Caco-2 (cell line): ENCODE measurements at regions of chr17 and their contacts with region 1.

Region 1: DNA sequence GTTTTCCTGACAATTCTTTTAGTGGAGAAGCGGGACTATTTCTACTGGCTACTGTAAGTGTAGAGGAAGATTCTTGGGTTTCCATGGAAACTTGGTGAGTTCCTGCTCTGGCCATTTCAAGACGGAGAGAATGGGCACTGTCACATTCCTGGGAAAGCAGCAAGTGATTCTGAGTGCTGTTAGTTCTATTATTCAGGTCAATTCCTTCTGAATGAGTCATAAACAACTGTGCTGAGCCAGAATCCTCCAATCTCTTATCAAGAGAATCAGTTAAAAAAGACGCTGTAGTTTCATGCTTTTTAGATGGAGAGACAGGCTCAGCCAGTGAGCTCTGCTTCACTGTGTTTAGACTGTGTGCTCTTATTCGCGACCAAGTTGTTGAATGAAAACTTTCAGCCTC is 19.6 kb downstream of the AKAP10 start:
- DNase-seq: peak; percentile 56 to 60
- H3K4me3 ChIP-seq: no peak overlapping the region
- H3K4me3 Mint-ChIP-seq: peak overlapping the region; percentile 60
- H3K27ac Mint-ChIP-seq: peak overlapping the region; percentile 80
- H3K4me1 ChIP-seq: peaks cover 20% of the 10 kb centered on the region
- H3K4me1 Mint-ChIP-seq: peaks cover 14% of the 10 kb centered on the region
- H3K27me3 ChIP-seq: no peaks in the 10 kb centered on the region
- H3K27me3 Mint-ChIP-seq: no peaks in the 10 kb centered on the region
- CTCF ChIP-seq: no peak

Region 2: DNA sequence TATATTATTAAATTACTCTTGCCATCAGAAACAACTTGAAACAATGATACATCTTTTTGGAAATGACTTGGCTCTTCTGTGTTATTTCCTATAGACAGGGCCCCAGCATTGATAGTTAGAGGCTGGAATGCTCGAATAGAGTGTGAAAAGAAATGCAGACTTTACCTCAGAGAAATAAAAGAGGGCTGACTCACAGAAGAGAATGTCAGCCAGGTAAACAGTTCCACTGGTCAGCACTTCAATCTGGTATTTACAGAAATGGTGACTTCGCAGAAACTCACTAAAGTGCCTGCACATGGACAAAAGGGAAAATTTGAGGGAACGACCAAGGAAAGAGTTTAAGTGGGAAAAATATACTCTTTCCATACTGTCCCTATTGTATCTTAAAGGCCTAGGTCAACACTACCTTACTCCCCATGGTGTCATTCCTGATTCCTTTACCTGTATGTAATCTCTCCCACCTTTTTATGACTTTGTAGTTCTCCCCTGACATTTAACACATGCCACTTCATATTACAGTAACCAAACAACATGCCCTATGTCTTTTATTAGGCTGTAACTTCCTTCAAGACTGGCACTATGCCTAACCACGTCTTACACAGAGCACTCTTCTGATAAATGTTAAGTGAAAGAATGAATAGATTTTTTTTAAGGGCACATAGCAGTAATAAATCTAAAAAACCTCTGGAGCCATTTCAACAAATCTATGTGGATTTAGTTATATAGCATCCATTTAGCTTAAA is 17.1 kb before region 1 on chr17:
- CTCF ChIA-PET with region 1: no interaction called
- POLR2A ChIA-PET with region 1: no interaction called
- intact Hi-C with region 1: loop called (anchors 2 kb)
- DNase-seq: peak in 1 of 2 experiments; percentile 36
- H3K4me3 ChIP-seq: no peak overlapping the region
- H3K4me3 Mint-ChIP-seq: peak overlapping the region; percentile 26
- H3K27ac Mint-ChIP-seq: peak overlapping the region; percentile 33
- H3K4me1 ChIP-seq: peaks cover 45% of the 10 kb centered on the region
- H3K4me1 Mint-ChIP-seq: peaks cover 31% of the 10 kb centered on the region
- H3K27me3 ChIP-seq: no peaks in the 10 kb centered on the region
- H3K27me3 Mint-ChIP-seq: no peaks in the 10 kb centered on the region
- CTCF ChIP-seq: no peak

Region 3: DNA sequence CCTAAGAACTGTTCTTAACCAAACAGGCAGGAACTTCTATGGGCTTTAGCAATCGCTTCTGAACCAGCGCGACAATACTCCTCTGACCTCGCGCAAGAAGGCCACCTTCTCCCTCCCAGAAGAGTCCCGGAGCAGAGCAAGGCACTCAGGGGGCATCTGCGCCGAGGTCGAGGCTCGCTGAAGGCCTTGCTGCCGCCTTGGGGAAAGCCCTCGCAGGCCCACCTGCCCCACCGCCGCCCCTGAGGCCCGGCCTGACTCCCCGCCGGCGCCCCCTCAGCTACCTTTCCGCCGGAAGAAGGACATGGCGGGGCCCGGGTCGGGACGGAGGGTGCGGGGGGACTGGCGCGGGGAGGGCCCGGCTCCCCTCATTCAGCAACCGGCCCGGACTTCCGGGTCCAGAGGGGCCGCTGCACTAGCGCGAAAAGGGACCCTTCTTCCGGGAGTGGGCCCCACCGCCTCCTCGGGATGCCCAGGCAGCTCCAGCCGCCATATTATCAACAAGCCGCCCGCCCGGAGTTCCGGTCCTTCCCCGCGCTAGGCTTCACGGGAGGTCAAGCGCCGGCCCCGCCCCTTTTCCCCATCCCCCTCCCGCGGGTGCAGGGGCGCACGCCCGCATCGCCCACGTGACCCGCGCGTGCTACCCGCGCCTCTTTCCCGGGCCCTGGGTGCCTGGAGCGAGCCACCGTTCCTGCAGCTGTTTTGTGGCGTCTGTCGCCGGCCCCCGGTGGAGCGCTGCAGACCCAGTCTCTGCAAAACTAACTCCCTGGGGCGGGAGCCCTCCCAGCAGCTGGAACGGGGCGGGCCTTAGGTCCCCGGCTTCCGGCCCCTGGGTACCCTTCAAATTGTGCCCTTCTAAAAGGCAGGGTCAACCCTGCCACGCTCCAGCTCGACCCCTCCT is 19.5 kb after region 1 on chr17 and contains the start of gene AKAP10:
- CTCF ChIA-PET with region 1: no interaction called
- POLR2A ChIA-PET with region 1: no interaction called
- intact Hi-C with region 1: loop called (anchors 1 kb)
- DNase-seq: peak; percentile 95 to 96
- H3K4me3 ChIP-seq: peak within 1 kb of the TSS; percentile 83
- H3K4me3 Mint-ChIP-seq: peak within 1 kb of the TSS; percentile 94
- H3K27ac Mint-ChIP-seq: peak within 1 kb of the TSS; percentile 90
- H3K4me1 ChIP-seq: peaks cover 4% of the 10 kb centered on the region; the same call in 1 of the 2 replicates
- H3K4me1 Mint-ChIP-seq: no peaks in the 10 kb centered on the region
- H3K27me3 ChIP-seq: no peaks in the 10 kb centered on the region
- H3K27me3 Mint-ChIP-seq: no peaks in the 10 kb centered on the region
- CTCF ChIP-seq: no peak
- total RNA-seq, gene AKAP10: 39.9 and 41.2 TPM in 2 replicates

Region 4: DNA sequence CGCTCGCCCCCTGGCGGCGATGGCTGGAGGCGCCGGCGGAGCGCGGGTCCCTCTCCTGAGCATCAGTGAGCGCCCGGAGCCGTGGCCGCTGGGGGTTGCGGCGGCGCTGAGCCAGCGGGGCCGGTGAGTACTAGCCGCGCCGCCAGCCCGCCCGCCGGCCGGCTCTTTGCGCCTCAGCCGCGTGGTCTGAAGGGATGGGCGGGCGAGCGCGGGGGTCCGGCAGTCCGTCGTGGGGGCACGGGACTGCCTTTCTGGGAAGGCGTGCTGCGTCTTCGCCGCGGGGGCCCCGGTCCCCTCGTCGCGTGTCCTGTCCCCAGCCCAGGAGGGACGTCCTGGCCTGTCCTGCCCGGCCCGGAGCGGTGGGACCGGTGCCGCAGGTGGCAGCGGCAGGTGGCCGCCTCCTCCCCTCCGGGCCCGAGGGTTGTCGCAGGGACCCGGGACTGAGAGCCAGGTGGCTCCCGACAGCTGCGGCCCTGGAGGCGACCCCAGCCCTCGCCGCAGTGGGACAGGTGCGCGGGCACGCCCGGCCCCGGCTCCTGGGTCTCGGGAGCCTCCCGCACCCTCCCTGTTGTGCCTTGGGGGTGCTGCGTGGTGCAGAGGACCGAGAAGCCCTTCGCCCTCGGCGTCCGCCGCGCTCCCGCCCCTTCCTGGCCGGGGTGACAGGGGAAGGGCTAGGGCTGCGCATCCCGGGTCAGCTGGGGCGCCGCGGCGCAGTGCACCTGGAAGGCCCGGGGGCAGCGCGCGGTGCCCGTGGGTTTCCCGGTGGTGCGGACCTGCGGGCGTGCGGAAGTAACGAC is 51.5 kb after region 1 on chr17 and contains the start of gene SPECC1:
- CTCF ChIA-PET with region 1: no interaction called
- POLR2A ChIA-PET with region 1: no interaction called
- intact Hi-C with region 1: no loop called
- DNase-seq: peak; percentile 81 to 96
- H3K4me3 ChIP-seq: peak within 1 kb of the TSS; percentile 72
- H3K4me3 Mint-ChIP-seq: peak within 1 kb of the TSS; percentile 96
- H3K27ac Mint-ChIP-seq: no peak within 1 kb of the TSS
- H3K4me1 ChIP-seq: no peaks in the 10 kb centered on the region; the same call in 1 of the 2 replicates
- H3K4me1 Mint-ChIP-seq: peaks cover 17% of the 10 kb centered on the region
- H3K27me3 ChIP-seq: peaks cover 2% of the 10 kb centered on the region
- H3K27me3 Mint-ChIP-seq: peaks cover 38% of the 10 kb centered on the region
- CTCF ChIP-seq: peak in 1 of 2 experiments; percentile 97
- total RNA-seq, gene SPECC1: 111 and 123 TPM in 2 replicates